Activated T-helper 1 cell treated with anti-CD3 and anti-CD28 coated beads, Interleukin-12 subunit alpha, Interleukin-12 subunit beta, Interleukin-2, Interleukin-4 antibody, amounts not matched to agents 30 ng/mL and 10 ng/mL and 1 ng/mL, durations not matched to agents 14 hours and 24 hours and 36 hours (primary cell): ENCODE measurements at regions of chr2 and their contacts with region 1.

Region 1: DNA sequence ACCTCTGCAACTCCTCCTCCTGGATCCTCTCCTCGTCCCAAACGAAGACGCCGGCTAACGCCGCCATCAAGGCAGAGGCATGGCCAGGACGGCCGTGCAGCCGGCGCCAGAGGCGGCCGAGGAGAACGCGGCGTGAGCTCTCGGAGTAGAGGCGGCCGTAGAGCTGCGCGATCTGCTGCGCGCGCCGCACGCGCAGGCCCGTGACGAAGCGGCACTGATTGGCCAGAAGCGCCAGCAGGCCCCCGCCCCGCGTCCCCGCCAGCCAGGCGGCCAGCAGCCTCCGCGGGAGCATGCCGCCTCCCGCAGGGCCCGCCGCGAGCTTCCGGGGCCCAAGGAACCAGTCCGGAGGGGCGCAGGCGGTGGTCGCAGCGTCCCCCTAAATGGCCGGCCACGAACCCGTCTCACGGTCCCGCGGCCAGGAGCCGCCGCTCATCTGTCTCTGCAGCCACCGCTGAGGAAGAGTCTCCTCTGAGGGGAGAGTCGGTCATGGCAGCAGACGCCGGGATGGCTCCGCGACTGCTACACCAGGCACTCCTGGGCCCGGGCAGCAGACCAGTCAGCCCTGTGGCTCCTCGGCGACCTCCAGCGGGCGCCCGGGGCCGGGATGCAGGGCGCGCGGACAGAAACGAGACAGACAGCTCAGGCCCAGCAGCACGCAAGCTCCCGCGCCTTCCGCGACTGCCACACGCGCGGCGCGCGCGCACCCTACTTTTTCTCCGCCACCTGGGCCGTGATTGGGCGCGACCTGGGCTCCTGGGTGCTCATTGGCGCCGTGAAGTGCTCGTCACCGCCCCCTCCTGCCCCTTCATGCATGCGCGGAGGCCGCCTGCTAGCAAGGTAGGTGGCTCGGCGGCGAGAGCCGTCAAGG is at the start of gene STARD7:
- DNase-seq: peak; percentile 98
- H3K4me3 Mint-ChIP-seq: peak within 1 kb of the TSS; percentile 96
- H3K27ac Mint-ChIP-seq: peak within 1 kb of the TSS; percentile 94
- H3K4me1 Mint-ChIP-seq: peaks cover 57% of the 10 kb centered on the region
- H3K27me3 Mint-ChIP-seq: no peaks in the 10 kb centered on the region
- total RNA-seq, gene STARD7: 216 and 229 TPM in 2 replicates

Region 2: DNA sequence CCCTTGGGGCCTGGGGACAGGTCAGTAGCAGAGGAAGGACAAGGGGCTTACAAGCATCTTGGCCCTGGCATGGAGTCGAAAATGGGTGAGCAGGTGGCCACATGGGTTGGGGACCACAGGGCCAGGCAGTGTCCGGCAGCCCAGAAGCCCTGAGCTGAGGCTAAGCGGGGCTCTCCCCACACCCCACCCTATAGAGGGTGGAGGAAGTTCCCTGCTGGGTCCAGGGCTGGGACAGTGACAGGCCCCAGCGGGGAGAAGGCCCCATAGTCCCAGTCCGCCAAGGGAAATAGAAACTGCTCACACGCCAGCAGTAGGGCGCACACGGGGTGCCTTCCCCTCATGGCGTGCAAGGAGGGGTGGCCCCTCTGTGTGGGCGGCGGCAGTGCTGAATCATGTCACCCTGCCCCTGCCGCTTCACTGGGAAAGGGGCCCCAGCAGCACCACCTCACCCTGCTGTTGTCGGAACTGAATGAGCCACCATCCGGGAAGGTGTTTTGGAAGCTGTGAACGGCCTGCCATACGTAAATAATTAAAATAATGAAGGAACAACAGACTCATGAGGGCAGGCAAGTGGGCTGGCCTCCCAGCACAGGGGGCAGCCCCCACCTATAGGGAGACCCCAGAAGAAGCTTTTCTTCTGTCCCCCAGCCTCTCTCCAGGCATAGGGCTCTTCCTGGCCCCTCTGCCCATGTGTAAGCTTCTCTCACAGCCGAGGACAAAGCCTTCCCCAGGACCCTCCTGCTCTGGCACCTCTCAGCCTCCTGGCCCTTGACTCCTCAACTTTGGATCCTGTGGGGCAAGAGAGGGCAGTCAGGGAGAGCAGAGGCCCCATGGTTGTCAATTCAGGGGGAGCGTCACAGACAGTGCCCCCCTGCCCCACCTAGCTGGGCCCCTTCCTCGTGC is 50.5 kb before region 1 on chr2:
- intact Hi-C with region 1: loop called (anchors 2 kb)
- DNase-seq: peak; percentile 74
- H3K4me3 Mint-ChIP-seq: peak overlapping the region; percentile 65
- H3K27ac Mint-ChIP-seq: peak overlapping the region; percentile 87
- H3K4me1 Mint-ChIP-seq: peaks cover 74% of the 10 kb centered on the region
- H3K27me3 Mint-ChIP-seq: no peaks in the 10 kb centered on the region

Region 3: DNA sequence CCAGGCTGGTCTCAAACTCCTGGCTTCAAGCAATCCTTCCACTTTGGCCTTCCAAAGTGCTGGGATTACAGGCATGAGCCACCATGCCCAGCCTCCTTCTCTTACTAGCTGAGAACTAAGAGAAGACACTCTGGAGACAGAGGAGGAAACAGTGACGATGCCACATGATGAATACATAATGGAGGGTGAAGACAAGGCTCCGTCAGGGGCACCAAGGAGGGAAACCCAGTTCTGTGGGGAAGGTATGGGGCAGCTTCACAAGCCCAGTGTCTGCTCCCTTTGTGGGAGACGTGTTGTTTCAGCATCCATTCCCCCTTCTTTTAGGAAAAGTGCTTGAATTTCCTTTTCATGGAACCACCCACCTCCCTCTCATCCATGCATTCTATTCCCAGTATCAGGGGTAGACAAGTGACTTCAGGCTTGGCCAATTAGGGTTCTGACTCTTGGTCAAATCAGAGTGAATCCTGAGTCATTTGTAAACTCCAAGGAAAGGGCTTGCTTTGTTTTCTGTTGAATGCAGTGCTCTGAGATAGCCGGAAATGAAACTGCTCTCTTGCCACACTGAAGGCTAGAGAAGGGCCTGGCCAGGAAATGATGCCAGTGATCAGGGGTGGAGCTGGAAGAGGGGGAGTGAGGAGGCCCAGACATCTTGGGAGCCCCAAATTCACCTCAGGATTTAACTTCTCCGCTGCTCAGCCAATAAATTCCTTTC is 33.7 kb after region 1 on chr2:
- intact Hi-C with region 1: loop called (anchors 1 kb)
- DNase-seq: peak; percentile 62
- H3K4me3 Mint-ChIP-seq: peak overlapping the region; percentile 63
- H3K27ac Mint-ChIP-seq: peak overlapping the region; percentile 87
- H3K4me1 Mint-ChIP-seq: peaks cover 52% of the 10 kb centered on the region
- H3K27me3 Mint-ChIP-seq: no peaks in the 10 kb centered on the region

Region 4: DNA sequence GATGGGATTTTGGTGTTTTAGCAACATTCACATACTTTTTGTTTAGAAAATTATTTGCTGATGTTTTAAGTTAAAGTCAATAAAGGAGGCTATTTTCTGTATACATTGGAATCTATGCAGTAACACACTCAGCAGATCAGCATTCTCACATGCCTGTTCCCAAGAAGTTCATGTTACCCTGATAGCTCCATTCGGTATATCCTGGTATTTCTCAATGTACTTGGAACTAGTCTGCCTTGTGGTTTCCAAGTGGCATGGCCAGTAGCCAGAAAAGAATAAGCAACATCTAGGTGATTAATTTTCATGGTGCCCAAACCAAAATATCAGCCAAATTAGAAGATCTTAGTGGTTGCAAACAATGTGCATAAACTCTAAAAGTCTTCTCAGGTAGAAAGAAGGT is 122.0 kb after region 1 on chr2:
- intact Hi-C with region 1: loop called (anchors 1 kb)
- DNase-seq: no peak
- H3K4me3 Mint-ChIP-seq: no peak overlapping the region
- H3K27ac Mint-ChIP-seq: no peak overlapping the region
- H3K4me1 Mint-ChIP-seq: peaks cover 68% of the 10 kb centered on the region
- H3K27me3 Mint-ChIP-seq: no peaks in the 10 kb centered on the region

Region 5: GRCh38 chr2:96739633-96740428 is 531.5 kb after region 1 on chr2 and contains the start of gene LMAN2L:
- intact Hi-C with region 1: loop called (anchors 2 kb)
- DNase-seq: peak; percentile 94
- H3K4me3 Mint-ChIP-seq: peak within 1 kb of the TSS; percentile 90
- H3K27ac Mint-ChIP-seq: peak within 1 kb of the TSS; percentile 77
- H3K4me1 Mint-ChIP-seq: peaks cover 32% of the 10 kb centered on the region
- H3K27me3 Mint-ChIP-seq: no peaks in the 10 kb centered on the region
- total RNA-seq, gene LMAN2L: 5.6 and 6.0 TPM in 2 replicates